Naive thymus-derived CD4-positive, alpha-beta T cell (primary cell): ENCODE measurements at regions of chr11 and their contacts with region 1.

Region 1: GRCh38 chr11:9573052-9573774 is at the start of gene WEE1:
- DNase-seq: peak; percentile 84 to 99 (median 88)
- ATAC-seq: peak; percentile 95
- H3K4me3 ChIP-seq: peak within 1 kb of the TSS; percentile 78
- H3K4me3 Mint-ChIP-seq: peak within 1 kb of the TSS; percentile 74 to 94 (median 85)
- H3K27ac ChIP-seq: peak within 1 kb of the TSS; percentile 73
- H3K27ac Mint-ChIP-seq: peak within 1 kb of the TSS in 7 of 9 donors; percentile 43 to 91 (median 59)
- H3K4me1 ChIP-seq: peaks cover 9 to 11% of the 10 kb centered on the region in 2 donors
- H3K4me1 Mint-ChIP-seq: peaks cover 0 to 43% (median 19%) of the 10 kb centered on the region in 7 donors
- H3K27me3 ChIP-seq: peaks cover 0 to 3% of the 10 kb centered on the region in 2 donors
- H3K27me3 Mint-ChIP-seq: peaks cover 3 to 22% (median 11%) of the 10 kb centered on the region in 5 donors
- total RNA-seq, gene WEE1: 0.43 to 47.6 (median 1.9) TPM

Region 2: GRCh38 chr11:8964324-8965320 is 608.6 kb before region 1 on chr11 and contains the start of gene TMEM9B:
- CTCF ChIA-PET with region 1: no interaction called
- POLR2A ChIA-PET with region 1: interaction called, 3 read pairs
- intact Hi-C with region 1: loop called (anchors 2 kb)
- DNase-seq: peak; percentile 35 to 85 (median 66)
- ATAC-seq: peak; percentile 90
- H3K4me3 ChIP-seq: peak within 1 kb of the TSS; percentile 96
- H3K4me3 Mint-ChIP-seq: peak within 1 kb of the TSS; percentile 94 to 99 (median 98)
- H3K27ac ChIP-seq: peak within 1 kb of the TSS; percentile 92
- H3K27ac Mint-ChIP-seq: peak within 1 kb of the TSS; percentile 94 to 99 (median 98)
- H3K4me1 ChIP-seq: peaks cover 13 to 17% of the 10 kb centered on the region in 2 donors
- H3K4me1 Mint-ChIP-seq: peaks cover 17 to 45% (median 32%) of the 10 kb centered on the region in 7 donors
- H3K27me3 ChIP-seq: no peaks in the 10 kb centered on the region
- H3K27me3 Mint-ChIP-seq: no peaks in the 10 kb centered on the region
- total RNA-seq, gene TMEM9B: 16.2 to 33.6 (median 30.6) TPM

Region 3: DNA sequence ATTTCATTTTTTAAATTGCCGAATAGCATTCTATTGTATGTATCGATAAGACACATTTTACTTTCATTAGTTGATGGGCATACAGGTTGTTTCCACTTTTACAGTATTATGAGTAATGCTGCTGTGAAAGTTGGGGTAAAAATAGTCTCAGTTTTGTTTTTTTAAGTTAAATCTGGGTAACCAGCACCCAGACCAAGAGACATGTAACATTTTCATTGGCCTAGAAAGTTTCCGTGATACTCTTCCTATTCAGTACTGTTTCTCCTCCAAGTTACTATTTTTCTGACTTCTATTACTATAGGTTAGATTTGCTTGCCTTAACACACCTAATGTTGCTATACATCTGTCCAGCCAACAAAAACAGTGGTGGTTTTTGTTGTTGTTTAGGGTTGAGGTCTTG is 176.5 kb before region 1 on chr11:
- CTCF ChIA-PET with region 1: no interaction called
- POLR2A ChIA-PET with region 1: no interaction called
- intact Hi-C with region 1: no loop called
- DNase-seq: no peak
- ATAC-seq: no peak
- H3K4me3 ChIP-seq: no peak overlapping the region
- H3K4me3 Mint-ChIP-seq: peak overlapping the region in 5 of 10 donors; percentile 1 to 68 (median 10)
- H3K27ac ChIP-seq: no peak overlapping the region
- H3K27ac Mint-ChIP-seq: peak overlapping the region in 2 of 9 donors; percentile 3 to 11
- H3K4me1 ChIP-seq: peaks cover 8 to 13% of the 10 kb centered on the region in 2 donors
- H3K4me1 Mint-ChIP-seq: peaks cover 45 to 73% (median 60%) of the 10 kb centered on the region in 7 donors
- H3K27me3 ChIP-seq: no peaks in the 10 kb centered on the region
- H3K27me3 Mint-ChIP-seq: no peaks in the 10 kb centered on the region

Region 4: GRCh38 chr11:9534791-9535781 is 38.1 kb before region 1 on chr11:
- CTCF ChIA-PET with region 1: interaction called, 5 read pairs
- POLR2A ChIA-PET with region 1: no interaction called
- intact Hi-C with region 1: loop called (anchors 1 to 2 kb)
- DNase-seq: peak; percentile 34 to 83 (median 62)
- ATAC-seq: peak; percentile 84
- H3K4me3 ChIP-seq: no peak overlapping the region
- H3K4me3 Mint-ChIP-seq: no peak overlapping the region
- H3K27ac ChIP-seq: no peak overlapping the region
- H3K27ac Mint-ChIP-seq: no peak overlapping the region
- H3K4me1 ChIP-seq: no peaks in the 10 kb centered on the region
- H3K4me1 Mint-ChIP-seq: no peaks in the 10 kb centered on the region
- H3K27me3 ChIP-seq: no peaks in the 10 kb centered on the region
- H3K27me3 Mint-ChIP-seq: no peaks in the 10 kb centered on the region

Region 5: GRCh38 chr11:9613118-9613829 is 40.1 kb after region 1 on chr11:
- CTCF ChIA-PET with region 1: interaction called, 5 read pairs
- POLR2A ChIA-PET with region 1: interaction called, 10 read pairs
- intact Hi-C with region 1: loop called (anchors 1 kb)
- DNase-seq: peak; percentile 63 to 88 (median 76)
- ATAC-seq: peak; percentile 70
- H3K4me3 ChIP-seq: peak overlapping the region; percentile 71
- H3K4me3 Mint-ChIP-seq: peak overlapping the region; percentile 94 to 99 (median 96)
- H3K27ac ChIP-seq: peak overlapping the region; percentile 75
- H3K27ac Mint-ChIP-seq: peak overlapping the region; percentile 82 to 98 (median 92)
- H3K4me1 ChIP-seq: peaks cover 0 to 14% of the 10 kb centered on the region in 2 donors
- H3K4me1 Mint-ChIP-seq: peaks cover 9 to 34% (median 18%) of the 10 kb centered on the region in 7 donors
- H3K27me3 ChIP-seq: no peaks in the 10 kb centered on the region
- H3K27me3 Mint-ChIP-seq: no peaks in the 10 kb centered on the region

Region 6: DNA sequence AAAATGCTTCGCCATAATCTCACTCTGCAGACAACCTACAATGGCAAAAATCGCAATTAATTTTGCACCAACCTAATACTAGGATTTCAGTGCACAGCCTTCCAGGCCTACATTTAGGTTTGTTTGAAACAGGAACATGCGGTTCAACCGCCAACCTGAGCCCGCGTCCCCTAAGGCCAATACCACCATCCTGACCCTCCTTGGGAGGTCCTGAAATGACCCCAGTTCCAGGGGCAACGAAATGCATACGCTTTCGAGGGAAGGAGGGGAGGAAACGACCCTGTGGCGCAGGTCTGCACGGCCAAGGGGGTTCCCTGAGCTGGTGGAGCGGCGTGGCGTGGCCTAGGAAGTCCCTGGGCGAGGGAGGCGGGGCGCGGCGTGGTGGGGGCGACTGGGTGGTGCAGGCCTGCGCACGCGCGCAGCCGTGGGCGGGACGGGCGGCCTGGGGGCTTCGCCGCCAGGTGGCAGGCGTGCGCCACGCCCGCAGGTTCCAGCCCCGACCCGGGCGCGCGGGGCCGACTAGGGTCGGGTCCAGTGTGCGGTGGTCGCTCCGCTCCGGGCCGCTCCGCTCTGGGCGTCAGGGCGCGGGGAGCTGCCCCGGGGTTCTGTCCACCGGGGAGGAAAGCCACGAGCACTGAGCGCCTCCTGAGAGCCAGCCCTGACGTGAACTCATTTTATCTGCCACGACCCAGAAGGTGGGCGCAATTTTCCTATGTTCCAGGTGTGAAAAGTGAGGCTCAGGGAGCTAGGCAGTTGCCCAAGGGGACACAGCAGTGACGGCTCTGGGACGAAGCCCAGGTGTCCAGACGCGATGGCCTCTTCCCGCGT is 184.8 kb after region 1 on chr11:
- CTCF ChIA-PET with region 1: no interaction called
- POLR2A ChIA-PET with region 1: no interaction called
- intact Hi-C with region 1: loop called (anchors 2 kb)
- DNase-seq: peak; percentile 79 to 97 (median 90)
- ATAC-seq: peak; percentile 94
- H3K4me3 ChIP-seq: peak overlapping the region; percentile 91
- H3K4me3 Mint-ChIP-seq: peak overlapping the region; percentile 77 to 86 (median 84)
- H3K27ac ChIP-seq: peak overlapping the region; percentile 73
- H3K27ac Mint-ChIP-seq: peak overlapping the region; percentile 34 to 91 (median 81)
- H3K4me1 ChIP-seq: peaks cover 7 to 9% of the 10 kb centered on the region in 2 donors
- H3K4me1 Mint-ChIP-seq: peaks cover 12 to 39% (median 18%) of the 10 kb centered on the region in 7 donors
- H3K27me3 ChIP-seq: no peaks in the 10 kb centered on the region
- H3K27me3 Mint-ChIP-seq: no peaks in the 10 kb centered on the region

Region 7: DNA sequence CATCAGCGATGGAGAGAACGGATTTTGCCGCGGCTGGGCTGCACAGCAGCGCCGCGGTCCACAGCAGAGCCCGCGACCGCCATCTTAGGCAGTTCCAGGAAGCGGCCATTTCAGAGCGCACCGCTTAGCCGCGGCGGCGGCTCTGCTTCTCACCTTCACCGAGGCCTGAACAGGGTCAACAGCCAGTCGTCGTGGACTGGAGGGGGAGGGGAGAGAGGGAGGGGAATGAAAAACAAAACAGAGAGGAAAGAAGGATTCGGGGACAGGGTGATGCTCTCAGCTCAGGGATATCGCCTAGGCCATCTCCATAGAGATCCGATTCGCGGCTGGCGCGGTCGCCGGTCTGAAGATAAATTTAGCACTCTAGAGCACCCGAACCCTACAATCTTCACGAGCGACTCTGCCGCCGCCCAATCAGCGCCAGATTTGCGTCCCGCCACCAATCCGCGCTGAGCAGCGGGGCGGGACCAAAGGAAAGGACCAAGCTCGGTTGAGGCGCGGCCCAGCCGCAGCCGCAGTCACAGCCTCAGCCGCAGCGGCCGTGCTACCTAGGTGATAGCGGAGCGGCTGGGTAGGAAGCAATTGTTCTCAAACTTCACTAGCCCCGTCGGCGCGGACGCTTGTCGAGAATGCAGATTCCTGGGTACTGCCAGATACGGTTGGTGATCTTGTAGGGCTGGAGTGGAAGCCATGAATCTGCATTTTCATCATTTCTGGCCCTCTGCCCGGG is 1284.7 kb after region 1 on chr11 and contains the start of gene ZBED5:
- CTCF ChIA-PET with region 1: no interaction called
- POLR2A ChIA-PET with region 1: no interaction called
- intact Hi-C with region 1: loop called in 1 of 2 experiments (anchors 10 kb)
- DNase-seq: peak; percentile 93 to 97 (median 96)
- ATAC-seq: peak; percentile 94
- H3K4me3 ChIP-seq: peak within 1 kb of the TSS; percentile 91
- H3K4me3 Mint-ChIP-seq: peak within 1 kb of the TSS; percentile 94 to 100 (median 99)
- H3K27ac ChIP-seq: peak within 1 kb of the TSS; percentile 91
- H3K27ac Mint-ChIP-seq: peak within 1 kb of the TSS; percentile 98 to 100 (median 100)
- H3K4me1 ChIP-seq: peaks cover 5 to 9% of the 10 kb centered on the region in 2 donors
- H3K4me1 Mint-ChIP-seq: peaks cover 20 to 73% (median 60%) of the 10 kb centered on the region in 7 donors
- H3K27me3 ChIP-seq: no peaks in the 10 kb centered on the region
- H3K27me3 Mint-ChIP-seq: peaks cover 0 to 2% (median 0%) of the 10 kb centered on the region in 5 donors
- total RNA-seq, gene ZBED5: 56.7 to 146 (median 94.0) TPM